AG04449 (cell line): ENCODE measurements at regions of chr6 and their contacts with region 1.

Region 1: GRCh38 chr6:33744001-33744848 is 2.5 kb downstream of the IP6K3 start:
- DNase-seq: no peak
- H3K4me3 ChIP-seq: no peak overlapping the region
- CTCF ChIP-seq: peak; percentile 90

Region 2: GRCh38 chr6:33445119-33445603 is 299.1 kb before region 1 on chr6:
- CTCF ChIA-PET with region 1: no interaction called
- POLR2A ChIA-PET with region 1: no interaction called
- DNase-seq: no peak
- H3K4me3 ChIP-seq: no peak overlapping the region
- CTCF ChIP-seq: no peak

Region 3: DNA sequence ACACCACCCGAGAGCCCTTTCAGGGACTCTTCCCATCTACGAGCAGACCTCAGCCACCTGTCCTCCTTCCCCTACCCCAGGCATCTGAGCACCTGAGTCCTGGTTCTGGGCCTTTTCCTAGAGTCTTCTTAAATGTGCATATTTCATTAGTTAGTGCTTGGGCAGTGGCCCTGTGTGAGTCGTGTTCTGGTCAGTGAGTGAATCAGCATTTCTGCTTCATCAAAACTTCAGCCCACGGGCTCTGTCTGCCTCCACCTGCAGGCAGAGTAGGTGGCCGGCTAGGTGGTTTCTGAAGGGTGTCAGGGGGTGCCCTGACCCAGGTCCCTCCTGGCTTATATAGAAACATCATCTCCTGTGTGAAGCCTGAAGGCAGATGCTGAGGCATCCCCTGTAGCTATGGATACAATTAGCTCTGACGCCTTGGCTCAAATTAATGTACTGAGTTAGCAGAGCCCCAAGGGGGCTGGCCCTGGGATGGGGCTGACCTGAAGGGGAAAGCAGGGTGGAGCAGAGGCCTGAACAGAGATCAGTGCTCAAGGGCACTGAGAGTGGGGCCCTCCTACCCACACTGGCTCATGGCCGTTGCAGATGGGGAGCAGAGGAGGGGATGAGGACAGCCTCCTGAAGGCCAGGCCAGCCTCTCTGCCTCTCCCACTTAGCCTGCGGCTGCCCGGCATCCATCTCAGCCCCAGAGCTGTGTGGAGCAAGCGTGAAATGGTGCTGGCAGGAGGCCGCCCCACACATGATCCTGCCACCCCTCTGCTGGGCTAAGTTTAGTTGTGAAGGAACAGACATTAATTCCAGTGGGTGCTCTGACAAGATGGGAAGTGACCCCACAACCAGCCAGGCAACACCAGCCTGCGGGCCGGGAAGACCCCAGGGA is 11.2 kb before region 1 on chr6:
- CTCF ChIA-PET with region 1: interaction called, 104 read pairs
- POLR2A ChIA-PET with region 1: no interaction called
- DNase-seq: no peak
- H3K4me3 ChIP-seq: no peak overlapping the region
- CTCF ChIP-seq: no peak

Region 4: DNA sequence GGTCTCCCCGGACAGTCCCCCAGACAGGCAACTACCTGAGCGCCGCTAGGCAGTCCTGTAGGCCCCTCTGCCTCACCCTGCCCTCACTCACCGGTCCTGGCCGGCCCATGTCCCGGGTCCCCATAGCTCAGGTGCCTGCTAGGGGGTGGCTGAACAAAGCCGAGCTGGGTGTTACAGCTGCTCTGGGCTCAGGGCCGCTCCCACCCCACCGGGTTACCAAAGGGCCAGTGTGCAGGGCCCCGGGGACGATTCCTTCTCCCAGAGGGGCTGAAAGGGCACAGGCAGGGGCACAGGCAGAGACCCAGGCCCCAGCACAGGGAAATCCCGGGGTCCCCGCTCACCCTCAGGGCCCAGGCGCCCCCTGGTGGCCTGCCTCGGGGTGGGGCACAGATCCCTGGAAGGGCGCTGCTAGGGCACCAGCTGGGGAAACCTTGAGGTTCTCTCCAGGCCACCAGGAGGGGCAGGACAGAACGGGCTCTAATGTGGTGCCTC is 283.3 kb after region 1 on chr6:
- CTCF ChIA-PET with region 1: interaction called, 102 read pairs
- POLR2A ChIA-PET with region 1: no interaction called
- DNase-seq: no peak
- H3K4me3 ChIP-seq: no peak overlapping the region
- CTCF ChIP-seq: peak; percentile 90

Region 5: DNA sequence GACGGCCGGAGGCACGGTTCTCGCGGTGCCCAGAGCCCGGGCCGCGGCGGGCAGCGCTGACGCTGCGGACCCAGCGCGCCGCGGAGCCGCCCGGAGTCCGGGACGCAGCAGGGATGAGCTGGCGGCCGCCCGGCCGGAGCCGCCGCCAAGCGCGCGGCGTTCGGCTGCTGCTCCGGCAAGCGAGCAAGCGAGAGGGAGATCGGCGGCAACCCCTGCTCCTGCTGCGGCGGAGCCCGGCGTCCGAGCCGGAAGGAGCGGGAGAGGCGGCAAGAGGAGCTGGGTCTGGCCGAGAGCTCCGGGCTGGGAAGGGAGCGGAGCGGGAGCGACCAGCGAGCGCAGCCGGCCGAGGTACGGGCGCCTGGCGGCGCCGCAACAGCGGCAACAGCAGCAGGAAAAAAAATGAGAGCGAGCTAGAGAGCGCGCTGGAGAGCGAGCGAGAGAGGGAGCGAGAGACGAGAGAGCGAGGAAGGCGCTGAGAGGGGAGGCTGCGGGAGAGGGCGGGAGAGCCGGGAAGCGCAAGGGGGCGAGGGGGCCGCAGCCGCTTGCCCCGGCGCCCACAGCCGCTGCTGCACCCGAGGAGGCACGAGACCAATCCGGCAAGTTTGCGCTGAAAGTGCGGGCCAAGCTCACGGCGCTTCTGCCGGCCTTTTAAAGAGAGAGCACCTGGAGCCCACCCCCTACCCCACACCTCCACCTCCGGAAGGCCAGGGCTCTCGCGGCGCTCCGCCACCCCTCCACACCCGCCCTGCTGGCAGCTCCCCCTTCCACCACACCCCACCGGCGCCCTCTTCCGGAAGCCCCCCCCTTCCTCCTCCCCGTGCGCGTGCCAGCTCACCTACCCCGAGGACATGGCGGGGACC is 401.2 kb after region 1 on chr6:
- CTCF ChIA-PET with region 1: interaction called, 17 read pairs
- POLR2A ChIA-PET with region 1: no interaction called
- DNase-seq: no peak
- H3K4me3 ChIP-seq: peak overlapping the region; percentile 50
- CTCF ChIP-seq: no peak

Region 6: GRCh38 chr6:34154668-34155447 is 410.6 kb after region 1 on chr6:
- CTCF ChIA-PET with region 1: interaction called, 124 read pairs
- POLR2A ChIA-PET with region 1: no interaction called
- DNase-seq: no peak
- H3K4me3 ChIP-seq: peak overlapping the region; percentile 42
- CTCF ChIP-seq: peak; percentile 94